Caco-2 (cell line): ENCODE measurements at regions of chr10 and their contacts with region 1.

Region 1: DNA sequence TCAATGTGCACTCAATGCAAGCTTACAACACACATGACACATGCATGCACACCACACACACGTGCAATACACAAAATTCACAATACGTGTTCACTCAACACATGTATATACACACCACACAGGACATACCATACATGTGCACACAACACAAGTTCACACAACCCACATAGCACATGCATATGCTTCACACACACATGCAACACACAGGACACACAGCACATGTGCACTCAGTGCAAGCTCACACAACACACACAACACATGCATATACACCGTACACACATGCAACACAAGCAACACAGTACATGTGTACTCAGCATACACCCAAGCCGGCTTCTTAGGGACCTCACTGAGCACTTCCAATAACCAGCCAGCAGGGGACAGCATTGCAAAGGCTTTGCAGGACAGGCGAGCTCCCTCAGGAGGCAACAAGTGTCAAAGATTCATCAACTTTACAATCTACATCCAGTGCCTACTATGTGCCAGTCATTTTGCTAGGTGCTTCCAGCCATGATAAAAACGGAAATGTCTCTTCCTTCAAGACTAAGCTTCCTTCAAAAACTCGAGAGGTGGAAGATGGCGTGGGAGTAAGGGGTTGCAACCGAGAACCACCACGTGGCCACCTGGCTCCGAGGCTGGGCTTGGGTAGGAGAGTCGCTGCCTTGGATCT is 61.1 kb downstream of the JCAD start:
- DNase-seq: peak; percentile 87 to 90
- H3K4me3 ChIP-seq: no peak overlapping the region
- H3K4me3 Mint-ChIP-seq: no peak overlapping the region
- H3K27ac Mint-ChIP-seq: no peak overlapping the region
- H3K4me1 ChIP-seq: peaks cover 40% of the 10 kb centered on the region
- H3K4me1 Mint-ChIP-seq: peaks cover 48% of the 10 kb centered on the region
- H3K27me3 ChIP-seq: no peaks in the 10 kb centered on the region
- H3K27me3 Mint-ChIP-seq: no peaks in the 10 kb centered on the region
- CTCF ChIP-seq: peak; percentile 100

Region 2: GRCh38 chr10:29735596-29736318 is 262.5 kb before region 1 on chr10:
- CTCF ChIA-PET with region 1: interaction called, 5 read pairs
- POLR2A ChIA-PET with region 1: no interaction called
- intact Hi-C with region 1: loop called (anchors 5 kb)
- DNase-seq: peak; percentile 93 to 99
- H3K4me3 ChIP-seq: peak overlapping the region; percentile 75
- H3K4me3 Mint-ChIP-seq: peak overlapping the region; percentile 91
- H3K27ac Mint-ChIP-seq: peak overlapping the region; percentile 62
- H3K4me1 ChIP-seq: peaks cover 30% of the 10 kb centered on the region
- H3K4me1 Mint-ChIP-seq: peaks cover 21% of the 10 kb centered on the region
- H3K27me3 ChIP-seq: no peaks in the 10 kb centered on the region
- H3K27me3 Mint-ChIP-seq: no peaks in the 10 kb centered on the region
- CTCF ChIP-seq: peak; percentile 98 to 99

Region 3: GRCh38 chr10:29926693-29927048 is 71.6 kb before region 1 on chr10:
- CTCF ChIA-PET with region 1: no interaction called
- POLR2A ChIA-PET with region 1: no interaction called
- intact Hi-C with region 1: loop called (anchors 1 kb)
- DNase-seq: peak in 1 of 2 experiments; percentile 42
- H3K4me3 ChIP-seq: no peak overlapping the region
- H3K4me3 Mint-ChIP-seq: no peak overlapping the region
- H3K27ac Mint-ChIP-seq: no peak overlapping the region
- H3K4me1 ChIP-seq: peaks cover 23% of the 10 kb centered on the region
- H3K4me1 Mint-ChIP-seq: peaks cover 37% of the 10 kb centered on the region
- H3K27me3 ChIP-seq: no peaks in the 10 kb centered on the region
- H3K27me3 Mint-ChIP-seq: no peaks in the 10 kb centered on the region
- CTCF ChIP-seq: peak; percentile 46 to 60

Region 4: GRCh38 chr10:30160178-30160982 is 162.1 kb after region 1 on chr10:
- CTCF ChIA-PET with region 1: interaction called, 3 read pairs
- POLR2A ChIA-PET with region 1: no interaction called
- intact Hi-C with region 1: loop called (anchors 1 kb)
- DNase-seq: peak; percentile 76 to 87
- H3K4me3 ChIP-seq: no peak overlapping the region
- H3K4me3 Mint-ChIP-seq: no peak overlapping the region
- H3K27ac Mint-ChIP-seq: peak overlapping the region; percentile 4
- H3K4me1 ChIP-seq: peaks cover 30% of the 10 kb centered on the region
- H3K4me1 Mint-ChIP-seq: peaks cover 26% of the 10 kb centered on the region
- H3K27me3 ChIP-seq: no peaks in the 10 kb centered on the region
- H3K27me3 Mint-ChIP-seq: no peaks in the 10 kb centered on the region
- CTCF ChIP-seq: no peak

Region 5: GRCh38 chr10:30241422-30242110 is 243.3 kb after region 1 on chr10:
- CTCF ChIA-PET with region 1: interaction called, 31 read pairs
- POLR2A ChIA-PET with region 1: no interaction called
- intact Hi-C with region 1: loop called (anchors 1 kb)
- DNase-seq: no peak
- H3K4me3 ChIP-seq: no peak overlapping the region
- H3K4me3 Mint-ChIP-seq: no peak overlapping the region
- H3K27ac Mint-ChIP-seq: no peak overlapping the region
- H3K4me1 ChIP-seq: no peaks in the 10 kb centered on the region; the same call in 1 of the 2 replicates
- H3K4me1 Mint-ChIP-seq: no peaks in the 10 kb centered on the region
- H3K27me3 ChIP-seq: no peaks in the 10 kb centered on the region
- H3K27me3 Mint-ChIP-seq: no peaks in the 10 kb centered on the region
- CTCF ChIP-seq: no peak

Region 6: GRCh38 chr10:30359373-30360206 is 361.3 kb after region 1 on chr10:
- CTCF ChIA-PET with region 1: interaction called, 10 read pairs
- POLR2A ChIA-PET with region 1: no interaction called
- intact Hi-C with region 1: loop called (anchors 1 kb)
- DNase-seq: peak; percentile 90 to 93
- H3K4me3 ChIP-seq: no peak overlapping the region
- H3K4me3 Mint-ChIP-seq: no peak overlapping the region
- H3K27ac Mint-ChIP-seq: no peak overlapping the region
- H3K4me1 ChIP-seq: no peaks in the 10 kb centered on the region
- H3K4me1 Mint-ChIP-seq: peaks cover 7% of the 10 kb centered on the region
- H3K27me3 ChIP-seq: no peaks in the 10 kb centered on the region
- H3K27me3 Mint-ChIP-seq: peaks cover 3% of the 10 kb centered on the region
- CTCF ChIP-seq: peak; percentile 97